CD8-positive, alpha-beta T cell (primary cell): ENCODE measurements at regions of chr18 and their contacts with region 1.

Region 1: DNA sequence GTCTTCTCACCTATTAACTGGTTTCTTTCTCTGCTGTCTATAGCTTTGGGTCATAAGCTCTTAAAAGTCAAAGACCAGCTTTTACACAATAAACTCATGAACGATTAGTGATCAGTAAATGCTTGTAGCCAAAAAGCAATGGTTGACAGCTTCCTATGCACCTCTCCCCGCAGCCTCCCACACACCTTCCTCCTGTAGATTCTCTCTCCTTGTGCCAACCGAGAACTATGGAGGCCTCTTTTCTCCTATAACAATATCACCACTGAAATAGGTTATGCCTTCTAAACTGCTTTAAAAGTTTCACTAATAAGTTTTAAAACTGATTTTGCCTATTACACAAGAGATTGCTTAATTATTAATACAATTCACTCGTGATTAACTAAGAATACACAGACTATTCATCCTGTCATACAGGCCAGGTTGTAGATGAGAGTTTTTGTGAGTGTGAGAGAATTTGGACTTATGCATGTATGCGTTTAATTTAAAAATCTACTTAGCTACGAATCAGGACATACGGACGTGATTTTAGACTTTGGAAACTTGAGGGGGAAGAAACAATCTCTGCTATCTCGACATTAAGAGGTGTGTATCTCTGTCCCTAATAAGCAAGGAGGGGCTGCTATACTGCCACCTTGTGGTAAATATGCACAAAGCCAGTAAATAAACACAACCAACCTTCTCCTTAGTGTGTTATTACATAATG is 229.1 kb upstream of the RBBP8 start:
- DNase-seq: peak in 3 of 9 experiments; percentile 8 to 58 (median 44)
- ATAC-seq: no peak
- H3K4me3 ChIP-seq: no peak overlapping the region
- H3K4me3 Mint-ChIP-seq: no peak overlapping the region
- H3K27ac ChIP-seq: no peak overlapping the region
- H3K27ac Mint-ChIP-seq: no peak overlapping the region
- H3K4me1 ChIP-seq: no peaks in the 10 kb centered on the region
- H3K4me1 Mint-ChIP-seq: no peaks in the 10 kb centered on the region
- H3K27me3 ChIP-seq: no peaks in the 10 kb centered on the region
- H3K27me3 Mint-ChIP-seq: peaks cover 8% of the 10 kb centered on the region
- CTCF ChIP-seq: peak; percentile 78

Region 2: DNA sequence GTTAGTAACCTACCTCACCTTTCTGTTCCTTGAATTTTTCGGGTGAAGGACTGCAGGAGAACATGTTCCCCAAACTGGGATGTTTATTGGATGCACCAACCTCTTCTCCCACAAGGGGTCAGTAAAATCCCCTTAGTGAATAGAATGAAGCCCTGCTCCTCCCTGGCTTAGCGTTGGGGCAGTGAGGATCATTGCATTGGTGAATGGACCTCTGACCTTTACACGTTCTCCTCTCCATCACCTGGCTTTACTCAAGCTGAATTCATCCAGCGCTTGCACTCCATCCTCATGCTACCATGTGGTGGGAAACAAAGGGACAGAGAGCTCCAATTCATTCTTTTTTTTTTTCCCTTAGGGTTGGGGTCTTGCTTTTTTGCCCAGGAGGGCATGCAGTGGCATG is 806.2 kb before region 1 on chr18:
- CTCF ChIA-PET with region 1: no interaction called
- POLR2A ChIA-PET with region 1: no interaction called
- intact Hi-C with region 1: loop called (anchors 2 to 5 kb)
- DNase-seq: peak in 3 of 9 experiments; percentile 16 to 38 (median 32)
- ATAC-seq: no peak
- H3K4me3 ChIP-seq: no peak overlapping the region
- H3K4me3 Mint-ChIP-seq: no peak overlapping the region
- H3K27ac ChIP-seq: no peak overlapping the region
- H3K27ac Mint-ChIP-seq: no peak overlapping the region
- H3K4me1 ChIP-seq: no peaks in the 10 kb centered on the region
- H3K4me1 Mint-ChIP-seq: no peaks in the 10 kb centered on the region
- H3K27me3 ChIP-seq: peaks cover 0 to 7% of the 10 kb centered on the region in 2 experiments
- H3K27me3 Mint-ChIP-seq: peaks cover 24% of the 10 kb centered on the region
- CTCF ChIP-seq: peak; percentile 50

Region 3: DNA sequence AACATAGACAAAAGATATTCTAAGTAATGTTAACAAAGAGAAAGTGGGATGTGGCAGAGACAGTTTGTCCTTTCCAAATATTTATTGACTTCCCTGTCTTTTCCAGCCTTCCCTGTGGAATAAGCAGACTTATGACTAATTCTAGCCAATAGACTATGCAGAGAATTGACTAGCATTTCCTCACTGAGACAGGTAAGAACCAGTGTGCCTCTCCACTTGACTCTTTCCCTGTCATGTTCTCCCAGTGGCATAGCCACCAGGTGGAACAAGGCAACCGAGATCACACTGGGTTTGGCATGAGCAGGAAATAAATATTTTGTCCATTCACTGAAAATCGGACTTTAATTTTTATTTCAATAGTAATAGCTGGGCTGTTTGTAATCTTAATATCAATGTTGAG is 118.2 kb before region 1 on chr18:
- CTCF ChIA-PET with region 1: no interaction called
- POLR2A ChIA-PET with region 1: no interaction called
- intact Hi-C with region 1: no loop called
- DNase-seq: no peak
- ATAC-seq: no peak
- H3K4me3 ChIP-seq: no peak overlapping the region
- H3K4me3 Mint-ChIP-seq: no peak overlapping the region
- H3K27ac ChIP-seq: no peak overlapping the region
- H3K27ac Mint-ChIP-seq: no peak overlapping the region
- H3K4me1 ChIP-seq: no peaks in the 10 kb centered on the region
- H3K4me1 Mint-ChIP-seq: no peaks in the 10 kb centered on the region
- H3K27me3 ChIP-seq: peaks cover 0 to 4% of the 10 kb centered on the region in 2 experiments
- H3K27me3 Mint-ChIP-seq: peaks cover 7% of the 10 kb centered on the region
- CTCF ChIP-seq: no peak

Region 4: DNA sequence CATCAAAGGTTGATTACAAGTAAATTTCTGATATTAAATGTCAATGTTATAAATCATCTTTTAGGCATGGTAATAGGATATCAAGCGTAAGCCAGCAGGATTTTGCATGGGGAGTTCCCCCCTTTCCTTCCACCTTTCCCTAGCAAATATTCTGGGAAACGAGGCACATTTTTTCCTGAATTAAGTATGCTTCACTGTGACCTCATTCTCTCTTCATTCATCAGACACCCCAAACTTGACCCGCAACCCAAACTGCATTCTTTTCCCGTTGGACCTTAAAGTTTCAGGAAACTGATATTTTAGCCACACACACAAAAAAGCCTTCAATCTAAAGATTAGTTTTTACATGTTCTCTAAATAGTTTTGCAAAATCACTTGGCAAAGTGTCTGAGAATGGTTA is 71.8 kb before region 1 on chr18:
- CTCF ChIA-PET with region 1: no interaction called
- POLR2A ChIA-PET with region 1: no interaction called
- intact Hi-C with region 1: no loop called
- DNase-seq: no peak
- ATAC-seq: no peak
- H3K4me3 ChIP-seq: no peak overlapping the region
- H3K4me3 Mint-ChIP-seq: no peak overlapping the region
- H3K27ac ChIP-seq: no peak overlapping the region
- H3K27ac Mint-ChIP-seq: no peak overlapping the region
- H3K4me1 ChIP-seq: no peaks in the 10 kb centered on the region
- H3K4me1 Mint-ChIP-seq: no peaks in the 10 kb centered on the region
- H3K27me3 ChIP-seq: no peaks in the 10 kb centered on the region
- H3K27me3 Mint-ChIP-seq: peaks cover 2% of the 10 kb centered on the region
- CTCF ChIP-seq: no peak